WTC11 (cell line): ENCODE measurements at regions of chr20 and their contacts with region 1.

Region 1: DNA sequence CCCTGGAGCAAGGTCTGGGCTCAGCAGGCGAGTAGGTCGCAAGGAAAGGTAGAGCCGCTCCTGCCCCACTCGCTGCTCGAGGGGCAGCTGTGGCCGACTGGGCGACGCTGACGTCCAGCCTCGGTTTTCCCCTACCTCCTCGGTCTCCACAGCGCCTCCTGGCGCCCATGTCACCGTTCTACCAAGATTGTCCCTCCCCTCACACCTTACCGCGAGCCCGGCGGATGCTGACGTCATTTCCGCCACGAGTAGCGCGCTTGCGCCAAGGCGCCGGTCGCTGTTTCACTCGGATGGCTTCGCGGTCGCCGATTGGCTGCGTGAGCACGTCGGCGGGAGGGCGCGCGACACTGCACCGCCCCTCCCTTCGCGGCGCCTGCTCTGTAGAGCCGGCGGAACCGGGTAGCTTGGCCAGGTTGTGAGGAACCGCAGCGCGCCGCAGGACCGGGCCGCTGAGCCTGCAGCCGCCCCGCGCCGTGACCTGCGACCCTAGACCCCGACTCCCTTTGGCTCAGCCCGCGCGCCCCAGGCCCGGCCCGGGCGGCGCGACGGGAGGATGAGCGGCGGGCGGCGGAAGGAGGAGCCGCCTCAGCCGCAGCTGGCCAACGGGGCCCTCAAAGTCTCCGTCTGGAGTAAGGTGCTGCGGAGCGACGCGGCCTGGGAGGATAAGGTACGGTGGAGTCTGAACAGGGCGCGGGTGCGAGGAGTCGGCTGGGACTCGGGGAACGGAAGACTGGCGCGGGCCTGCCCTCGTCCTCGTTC is at the start of gene RAB5IF:
- DNase-seq: peak; percentile 100
- ATAC-seq: peak; percentile 91
- H3K4me3 Mint-ChIP-seq: peak within 1 kb of the TSS; percentile 97
- H3K27ac Mint-ChIP-seq: peak within 1 kb of the TSS; percentile 94
- H3K4me1 Mint-ChIP-seq: peaks cover 17% of the 10 kb centered on the region
- H3K27me3 Mint-ChIP-seq: no peaks in the 10 kb centered on the region; the same call in 1 of the 2 replicates
- CTCF ChIP-seq: peak; percentile 82
- total RNA-seq, gene RAB5IF: 83.2 to 89.4 TPM (median 88.4 TPM) in 3 replicates

Region 2: DNA sequence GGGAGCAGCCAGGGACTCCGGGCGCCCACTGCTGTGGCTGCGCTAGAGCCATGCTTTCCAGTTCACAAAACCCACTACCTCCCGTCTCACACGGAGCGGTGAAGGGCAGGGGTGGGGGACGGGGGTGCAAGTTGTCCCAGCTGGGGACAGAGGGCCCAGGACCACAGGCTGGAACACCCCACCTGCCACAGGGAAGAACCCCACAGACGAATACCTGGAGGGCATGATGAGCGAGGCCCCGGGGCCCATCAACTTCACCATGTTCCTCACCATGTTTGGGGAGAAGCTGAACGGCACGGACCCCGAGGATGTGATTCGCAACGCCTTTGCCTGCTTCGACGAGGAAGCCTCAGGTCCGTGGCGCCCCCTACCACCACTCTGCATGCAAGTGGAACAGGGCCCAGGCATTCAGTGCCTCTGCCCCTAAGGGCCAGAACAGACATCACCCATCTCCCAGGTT is 57.7 kb before region 1 on chr20:
- CTCF ChIA-PET with region 1: interaction called, 19 read pairs
- POLR2A ChIA-PET with region 1: no interaction called
- DNase-seq: peak; percentile 81
- ATAC-seq: peak; percentile 79
- H3K4me3 Mint-ChIP-seq: no peak overlapping the region
- H3K27ac Mint-ChIP-seq: 0 out of 2 replicates have a peak overlapping the region, but pooled peaks have one; percentile 77
- H3K4me1 Mint-ChIP-seq: peaks cover 27% of the 10 kb centered on the region
- H3K27me3 Mint-ChIP-seq: no peaks in the 10 kb centered on the region
- CTCF ChIP-seq: no peak

Region 3: DNA sequence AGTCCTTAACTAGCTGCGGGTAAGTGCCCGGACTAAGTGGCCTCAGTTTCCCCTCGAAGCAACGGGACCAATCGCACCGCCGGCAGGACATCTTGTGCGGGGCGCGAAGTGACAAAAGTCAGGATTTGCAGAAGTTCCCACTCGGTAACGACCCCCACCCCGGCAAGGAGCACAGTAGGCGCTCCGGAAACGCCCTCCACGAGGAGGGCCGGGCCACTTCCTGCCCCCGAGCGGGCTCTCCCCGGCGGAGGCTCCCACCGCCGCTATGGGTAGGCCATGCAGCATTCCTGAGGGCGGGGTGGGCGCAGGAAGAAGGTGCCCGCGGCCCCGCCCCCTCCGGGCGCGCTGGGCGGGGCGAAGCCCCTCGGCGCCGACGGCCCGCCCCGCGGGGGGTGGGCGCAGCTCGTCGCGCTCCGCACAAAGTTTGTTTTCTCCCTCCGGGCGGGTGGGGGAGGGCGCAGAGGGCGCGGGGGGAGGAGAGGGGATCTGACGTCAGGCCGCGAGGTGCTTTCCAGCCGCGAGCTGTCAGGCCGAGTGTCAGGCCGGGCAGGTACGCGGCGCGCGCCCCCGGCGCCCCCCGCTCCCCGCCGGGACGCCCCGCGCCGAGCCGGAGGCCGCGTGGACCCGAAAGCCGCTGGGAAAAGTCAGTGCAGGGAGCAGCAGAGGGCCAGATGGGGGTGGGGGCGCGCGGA is 32.3 kb before region 1 on chr20 and contains the start of gene TGIF2:
- CTCF ChIA-PET with region 1: interaction called, 16 read pairs
- POLR2A ChIA-PET with region 1: interaction called, 16 read pairs
- DNase-seq: peak; percentile 94
- ATAC-seq: peak; percentile 67
- H3K4me3 Mint-ChIP-seq: peak within 1 kb of the TSS; percentile 86
- H3K27ac Mint-ChIP-seq: peak within 1 kb of the TSS; percentile 99
- H3K4me1 Mint-ChIP-seq: peaks cover 59% of the 10 kb centered on the region
- H3K27me3 Mint-ChIP-seq: no peaks in the 10 kb centered on the region
- CTCF ChIP-seq: no peak
- total RNA-seq, gene TGIF2: 71.1 to 88.9 TPM (median 80.3 TPM) in 3 replicates

Region 4: GRCh38 chr20:36624068-36624943 is 18.7 kb after region 1 on chr20:
- CTCF ChIA-PET with region 1: interaction called, 12 read pairs
- POLR2A ChIA-PET with region 1: no interaction called
- DNase-seq: peak; percentile 22
- ATAC-seq: peak; percentile 88
- H3K4me3 Mint-ChIP-seq: no peak overlapping the region
- H3K27ac Mint-ChIP-seq: peak overlapping the region; percentile 0; the same call in 1 of the 2 replicates
- H3K4me1 Mint-ChIP-seq: peaks cover 9% of the 10 kb centered on the region
- H3K27me3 Mint-ChIP-seq: no peaks in the 10 kb centered on the region
- CTCF ChIP-seq: no peak